Sciatic nerve (tissue), 2 donors: ENCODE measurements at regions of chr6 and their contacts with region 1.

Region 1: DNA sequence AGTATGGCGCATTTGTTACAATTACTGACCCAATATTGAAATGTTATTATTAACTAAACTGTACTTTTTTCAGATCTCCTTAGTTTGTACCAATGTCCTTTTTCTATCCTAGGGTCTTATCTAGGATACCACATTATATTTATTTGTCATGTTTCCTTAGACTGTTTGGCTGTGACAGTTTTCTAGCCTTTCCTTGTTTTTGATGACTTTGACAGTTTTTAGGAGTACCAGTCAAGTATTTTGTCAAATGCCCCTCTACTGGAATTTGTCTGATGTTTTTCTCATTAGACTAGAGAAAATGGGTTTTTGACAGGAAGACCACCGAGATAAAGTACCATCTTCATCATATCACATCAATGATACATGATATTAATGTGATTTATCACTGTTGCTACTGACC is 14.6 kb downstream of the CCNC start:
- DNase-seq: no peak
- ATAC-seq: no peak

Region 2: GRCh38 chr6:99324996-99325395 is 228.9 kb before region 1 on chr6:
- intact Hi-C with region 1: no loop called
- DNase-seq: no peak
- ATAC-seq: no peak

Region 3: GRCh38 chr6:99588618-99589289 is 34.9 kb after region 1 on chr6:
- intact Hi-C with region 1: loop called (anchors 1 kb)
- DNase-seq: peak; percentile 74
- ATAC-seq: peak; percentile 89